A673 (cell line): ENCODE measurements at regions of chr11 and their contacts with region 1.

Region 1: GRCh38 chr11:12723421-12724297 is 49.4 kb downstream of the TEAD1 start:
- DNase-seq: peak; percentile 96
- H3K4me3 ChIP-seq: peak overlapping the region; percentile 37
- H3K27ac ChIP-seq: peak overlapping the region; percentile 73
- H3K4me1 ChIP-seq: peaks cover 57% of the 10 kb centered on the region
- H3K27me3 ChIP-seq: no peaks in the 10 kb centered on the region
- CTCF ChIP-seq: no peak

Region 2: GRCh38 chr11:11931461-11932055 is 792.1 kb before region 1 on chr11:
- CTCF ChIA-PET with region 1: no interaction called
- POLR2A ChIA-PET with region 1: no interaction called
- intact Hi-C with region 1: no loop called
- DNase-seq: peak; percentile 68
- H3K4me3 ChIP-seq: no peak overlapping the region
- H3K27ac ChIP-seq: no peak overlapping the region
- H3K4me1 ChIP-seq: no peaks in the 10 kb centered on the region
- H3K27me3 ChIP-seq: no peaks in the 10 kb centered on the region
- CTCF ChIP-seq: peak; percentile 71

Region 3: DNA sequence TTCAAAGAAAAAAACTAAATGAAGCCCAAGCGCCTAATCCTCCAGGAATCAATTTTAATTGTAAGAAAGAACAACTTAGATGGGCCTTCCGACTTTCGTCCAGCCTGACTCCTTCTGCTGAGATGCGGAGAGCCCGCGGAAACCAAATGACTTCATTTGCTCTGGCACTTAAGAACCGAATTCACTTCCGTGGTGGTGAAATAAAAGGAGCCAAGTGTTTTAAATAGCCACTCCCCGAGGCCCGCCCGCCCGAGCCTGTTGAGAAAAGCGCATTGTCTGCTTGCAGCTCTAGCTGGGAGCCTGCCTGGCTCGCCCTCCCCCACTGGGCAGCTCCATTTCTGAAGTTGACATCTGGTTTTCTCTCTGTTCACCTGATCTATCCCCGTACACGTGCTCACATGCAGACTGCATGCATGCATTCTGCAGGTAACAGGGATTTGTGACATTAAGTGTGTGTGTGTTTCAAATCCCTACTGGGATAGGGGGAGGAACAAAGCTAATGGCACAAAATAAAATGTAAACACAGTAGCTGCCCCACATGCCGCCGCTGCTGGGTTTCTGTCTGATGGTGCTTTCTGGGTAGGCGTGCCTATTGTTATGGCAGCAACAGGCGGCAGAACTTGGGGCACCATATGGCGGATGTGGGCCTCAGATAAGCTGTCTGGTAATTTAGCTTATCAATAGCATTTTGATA is 43.3 kb before region 1 on chr11:
- CTCF ChIA-PET with region 1: interaction called, 3 read pairs
- POLR2A ChIA-PET with region 1: no interaction called
- intact Hi-C with region 1: loop called (anchors 2 kb)
- DNase-seq: peak; percentile 95
- H3K4me3 ChIP-seq: peak overlapping the region; percentile 31
- H3K27ac ChIP-seq: peak overlapping the region; percentile 68
- H3K4me1 ChIP-seq: peaks cover 58% of the 10 kb centered on the region
- H3K27me3 ChIP-seq: no peaks in the 10 kb centered on the region
- CTCF ChIP-seq: no peak

Region 4: DNA sequence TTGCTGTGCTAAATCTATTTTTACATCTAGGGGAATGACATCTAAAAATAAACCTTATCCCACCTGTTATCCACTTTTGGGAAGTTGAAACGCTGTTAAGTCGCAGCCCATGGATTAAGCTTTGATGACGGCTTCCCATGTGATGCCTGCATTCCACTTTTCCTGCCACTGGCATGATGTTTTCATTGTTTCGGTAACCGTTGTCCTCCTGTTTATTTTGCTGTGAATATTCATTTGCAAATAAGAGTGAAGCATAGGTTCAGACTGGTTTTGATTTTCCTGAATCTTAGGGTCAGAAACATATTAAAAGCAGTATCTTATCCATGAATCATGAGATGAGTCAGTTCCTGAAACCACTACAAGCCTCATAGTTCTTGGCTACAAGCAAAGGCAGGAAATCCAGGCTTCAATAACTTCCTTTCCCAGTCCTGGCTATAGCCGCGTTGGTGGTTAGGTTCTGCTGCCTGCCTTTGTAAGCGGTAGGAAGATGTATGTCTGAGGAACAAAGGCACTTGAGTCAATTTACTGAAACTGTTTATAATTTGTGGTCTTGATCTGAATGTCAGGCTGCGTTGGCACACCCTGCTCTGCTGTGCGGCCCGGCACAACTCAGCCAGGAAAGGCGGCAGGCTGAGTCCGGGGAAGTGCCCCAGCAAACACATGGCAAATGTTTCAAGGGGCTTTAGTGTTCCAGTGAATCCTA is 30.0 kb before region 1 on chr11:
- CTCF ChIA-PET with region 1: no interaction called
- POLR2A ChIA-PET with region 1: no interaction called
- intact Hi-C with region 1: loop called (anchors 2 kb)
- DNase-seq: peak; percentile 97
- H3K4me3 ChIP-seq: peak overlapping the region; percentile 23
- H3K27ac ChIP-seq: peak overlapping the region; percentile 85
- H3K4me1 ChIP-seq: peaks cover 77% of the 10 kb centered on the region
- H3K27me3 ChIP-seq: no peaks in the 10 kb centered on the region
- CTCF ChIP-seq: no peak